Activated naive CD4-positive, alpha-beta T cell treated with anti-CD3 and anti-CD28 coated beads for 36 hours (primary cell): ENCODE measurements at regions of chr17 and their contacts with region 1.

Region 1: GRCh38 chr17:32551186-32551955 is 64.6 kb downstream of the CDK5R1 start:
- DNase-seq: peak; percentile 22
- H3K4me3 Mint-ChIP-seq: no peak overlapping the region
- H3K27ac Mint-ChIP-seq: peak overlapping the region; percentile 46
- H3K4me1 Mint-ChIP-seq: peaks cover 48% of the 10 kb centered on the region
- H3K27me3 Mint-ChIP-seq: no peaks in the 10 kb centered on the region

Region 2: GRCh38 chr17:32240750-32241149 is 310.6 kb before region 1 on chr17:
- CTCF ChIA-PET with region 1: no interaction called
- intact Hi-C with region 1: no loop called
- DNase-seq: no peak
- H3K4me3 Mint-ChIP-seq: no peak overlapping the region
- H3K27ac Mint-ChIP-seq: no peak overlapping the region
- H3K4me1 Mint-ChIP-seq: no peaks in the 10 kb centered on the region
- H3K27me3 Mint-ChIP-seq: no peaks in the 10 kb centered on the region

Region 3: GRCh38 chr17:32491371-32492263 is 59.8 kb before region 1 on chr17:
- CTCF ChIA-PET with region 1: interaction called, 5 read pairs
- intact Hi-C with region 1: loop called (anchors 2 kb)
- DNase-seq: peak; percentile 80
- H3K4me3 Mint-ChIP-seq: peak overlapping the region; percentile 90
- H3K27ac Mint-ChIP-seq: peak overlapping the region; percentile 89
- H3K4me1 Mint-ChIP-seq: peaks cover 63% of the 10 kb centered on the region
- H3K27me3 Mint-ChIP-seq: no peaks in the 10 kb centered on the region